H1 (cell line): ENCODE measurements at regions of chr10 and their contacts with region 1.

Region 1: DNA sequence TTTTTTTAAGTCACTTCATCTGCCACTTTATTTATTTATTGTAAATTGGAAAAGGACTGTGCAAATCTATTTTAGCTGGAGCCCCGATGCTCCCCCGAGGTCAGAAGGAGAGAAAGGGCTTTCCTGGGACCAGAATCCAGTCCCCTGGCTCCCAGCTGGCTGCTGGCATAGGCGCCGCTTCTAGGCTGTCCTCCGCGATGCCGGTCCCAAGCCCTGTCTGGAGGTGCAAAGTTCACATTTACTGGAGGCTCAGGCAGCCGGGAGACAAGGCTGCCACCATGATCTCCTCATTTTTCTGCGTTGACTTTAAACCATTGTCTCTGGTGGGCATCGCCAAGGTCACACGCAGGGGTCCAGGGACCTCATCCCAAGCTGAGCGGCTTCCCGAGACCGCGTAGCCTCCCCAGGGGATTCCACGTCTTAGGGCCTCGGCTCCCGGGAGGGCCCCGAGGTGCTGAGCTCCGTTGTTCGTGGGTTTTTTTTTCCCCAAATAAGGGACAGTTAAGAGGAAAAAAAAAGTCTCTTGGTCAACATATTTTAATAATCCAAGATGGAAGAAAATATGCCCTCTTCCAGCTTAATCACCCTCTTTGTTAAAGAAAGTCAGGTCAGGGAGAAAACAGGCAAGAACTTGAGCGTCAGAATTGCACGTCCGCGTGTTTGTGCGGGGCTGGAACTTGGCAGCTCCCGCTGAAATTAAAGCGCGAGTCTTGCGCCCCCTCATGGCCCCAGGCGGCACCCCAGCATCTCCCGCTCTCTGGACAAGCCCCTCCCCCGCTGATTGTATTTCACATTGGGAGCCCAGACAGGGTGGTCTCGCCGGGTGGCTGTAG is 11.9 kb downstream of the RGR start:
- DNase-seq: peak; percentile 49 to 91
- H3K4me3 ChIP-seq: no peak overlapping the region
- H3K27ac ChIP-seq: no peak overlapping the region
- H3K4me1 ChIP-seq: no peaks in the 10 kb centered on the region
- H3K27me3 ChIP-seq: peaks cover 0 to 8% (median 8%) of the 10 kb centered on the region in 4 experiments; a peak in 6 of 7 replicates
- CTCF ChIP-seq: peak; percentile 80 to 94 (median 88)
- EP300 ChIP-seq: no peak
- POLR2A ChIP-seq: no peak
- RAD21 ChIP-seq: peak; percentile 55 to 66

Region 2: DNA sequence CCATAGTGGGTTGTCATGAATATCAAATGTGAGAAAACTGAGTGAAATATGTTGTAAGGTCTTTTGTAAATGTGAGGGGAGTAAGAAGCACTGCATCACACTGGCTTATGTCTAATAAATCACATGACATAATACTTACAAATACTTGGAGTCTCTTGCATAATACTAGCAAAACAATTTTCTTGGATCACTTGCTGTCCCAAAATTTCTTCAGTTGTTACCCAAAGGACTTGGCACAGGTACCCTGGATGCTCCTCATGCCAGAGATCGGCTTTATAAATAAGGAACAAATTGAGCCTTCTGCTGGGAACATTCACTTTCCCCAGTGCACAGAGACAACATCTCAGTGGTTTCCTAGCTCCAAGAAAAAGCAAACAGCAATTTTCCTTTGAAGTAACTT is 26.4 kb before region 1 on chr10:
- CTCF ChIA-PET with region 1: interaction called, 10 read pairs
- POLR2A ChIA-PET with region 1: no interaction called
- DNase-seq: no peak
- H3K4me3 ChIP-seq: no peak overlapping the region
- H3K27ac ChIP-seq: no peak overlapping the region
- H3K4me1 ChIP-seq: no peaks in the 10 kb centered on the region
- H3K27me3 ChIP-seq: no peaks in the 10 kb centered on the region; a peak in 1 of 7 replicates
- CTCF ChIP-seq: no peak
- EP300 ChIP-seq: no peak
- POLR2A ChIP-seq: no peak
- RAD21 ChIP-seq: no peak

Region 3: GRCh38 chr10:84237199-84238051 is 19.3 kb before region 1 on chr10:
- CTCF ChIA-PET with region 1: interaction called, 102 read pairs
- POLR2A ChIA-PET with region 1: no interaction called
- DNase-seq: peak; percentile 38 to 94
- H3K4me3 ChIP-seq: no peak overlapping the region; a peak in 1 of 8 replicates
- H3K27ac ChIP-seq: no peak overlapping the region
- H3K4me1 ChIP-seq: peaks cover 0 to 2% (median 0%) of the 10 kb centered on the region in 4 experiments; a peak in 3 of 7 replicates
- H3K27me3 ChIP-seq: peaks cover 0 to 10% (median 7%) of the 10 kb centered on the region in 4 experiments; a peak in 5 of 7 replicates
- CTCF ChIP-seq: peak; percentile 79 to 90 (median 83)
- EP300 ChIP-seq: no peak
- POLR2A ChIP-seq: no peak
- RAD21 ChIP-seq: peak; percentile 37 to 56; a peak in 3 of 4 replicates

Region 4: GRCh38 chr10:84244651-84245270 is 12.0 kb before region 1 on chr10 and contains the start of gene RGR:
- CTCF ChIA-PET with region 1: interaction called, 102 read pairs
- POLR2A ChIA-PET with region 1: interaction called, 3 read pairs
- DNase-seq: no peak
- H3K4me3 ChIP-seq: no peak within 1 kb of the TSS
- H3K27ac ChIP-seq: no peak within 1 kb of the TSS
- H3K4me1 ChIP-seq: no peaks in the 10 kb centered on the region
- H3K27me3 ChIP-seq: no peaks in the 10 kb centered on the region
- CTCF ChIP-seq: no peak
- EP300 ChIP-seq: no peak
- POLR2A ChIP-seq: no peak
- RAD21 ChIP-seq: no peak
- total RNA-seq, gene RGR: not detected in 2 replicates